GM12878 (cell line): ENCODE measurements at regions of chr2 and their contacts with region 1.

Region 1: GRCh38 chr2:74876081-74876886 is 42.4 kb downstream of the HK2 start:
- DNase-seq: peak; percentile 20
- ATAC-seq: peak; percentile 98
- H3K4me3 ChIP-seq: no peak overlapping the region
- H3K27ac ChIP-seq: no peak overlapping the region
- H3K4me1 ChIP-seq: no peaks in the 10 kb centered on the region
- H3K27me3 ChIP-seq: no peaks in the 10 kb centered on the region
- CTCF ChIP-seq: peak; percentile 37 to 68 (median 58); a peak in 5 of 6 replicates
- EP300 ChIP-seq: no peak
- POLR2A ChIP-seq: no peak
- RAD21 ChIP-seq: peak; percentile 77

Region 2: DNA sequence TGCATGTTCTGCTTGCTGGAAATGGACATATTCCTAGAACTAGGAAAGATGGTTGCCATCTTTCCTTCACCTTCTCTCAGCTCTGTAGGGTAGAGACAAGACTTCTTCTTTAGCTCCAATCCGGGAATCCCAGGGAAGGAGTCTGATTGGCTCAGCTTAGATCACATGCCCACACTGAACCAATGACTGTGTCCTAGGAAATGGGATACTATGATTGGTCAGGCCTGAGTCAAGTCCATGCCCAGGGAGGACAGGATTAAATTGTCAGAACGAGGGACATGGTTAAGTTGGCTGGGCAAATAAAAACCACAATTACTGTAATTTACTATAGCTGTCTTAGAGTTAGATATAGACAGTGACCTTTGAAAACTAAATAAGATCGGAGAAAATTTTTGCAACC is 190.9 kb before region 1 on chr2:
- CTCF ChIA-PET with region 1: interaction called, 29 read pairs
- POLR2A ChIA-PET with region 1: no interaction called
- RAD21 ChIA-PET with region 1: interaction called, 12 read pairs
- SMC1A ChIA-PET with region 1: interaction called, 19 read pairs
- in situ Hi-C with region 1: no loop called
- intact Hi-C with region 1: loop called (anchors 1 kb)
- DNase-seq: no peak
- ATAC-seq: no peak
- H3K4me3 ChIP-seq: no peak overlapping the region
- H3K27ac ChIP-seq: no peak overlapping the region
- H3K4me1 ChIP-seq: no peaks in the 10 kb centered on the region
- H3K27me3 ChIP-seq: no peaks in the 10 kb centered on the region
- CTCF ChIP-seq: no peak
- EP300 ChIP-seq: no peak
- POLR2A ChIP-seq: no peak
- RAD21 ChIP-seq: no peak

Region 3: GRCh38 chr2:74703373-74703772 is 172.9 kb before region 1 on chr2:
- CTCF ChIA-PET with region 1: interaction called, 4 read pairs
- POLR2A ChIA-PET with region 1: no interaction called
- RAD21 ChIA-PET with region 1: no interaction called
- SMC1A ChIA-PET with region 1: interaction called, 3 read pairs
- in situ Hi-C with region 1: loop called (anchors 5 kb)
- intact Hi-C with region 1: no loop called
- DNase-seq: no peak
- ATAC-seq: no peak
- H3K4me3 ChIP-seq: no peak overlapping the region
- H3K27ac ChIP-seq: no peak overlapping the region
- H3K4me1 ChIP-seq: peaks cover 9% of the 10 kb centered on the region
- H3K27me3 ChIP-seq: no peaks in the 10 kb centered on the region
- CTCF ChIP-seq: no peak
- EP300 ChIP-seq: no peak
- POLR2A ChIP-seq: no peak
- RAD21 ChIP-seq: no peak

Region 4: DNA sequence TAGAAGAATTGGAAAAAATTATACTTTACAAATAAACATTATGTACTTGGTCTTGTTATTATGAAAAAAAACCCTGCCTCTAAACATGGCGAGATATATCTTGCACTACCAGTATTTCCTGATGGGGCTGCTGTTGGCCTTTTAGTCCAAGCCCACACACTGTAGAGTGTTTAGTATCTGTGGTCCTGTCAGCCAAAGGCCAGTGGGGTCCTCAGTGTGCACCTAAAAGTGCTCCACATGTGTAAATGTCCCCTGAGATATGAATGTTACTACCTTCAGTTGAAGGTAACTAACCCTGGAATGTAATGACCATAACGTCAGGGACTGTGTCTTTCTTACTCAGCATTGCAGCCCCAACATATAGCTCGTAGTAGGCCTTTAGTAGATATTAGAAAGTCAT is 113.5 kb before region 1 on chr2:
- CTCF ChIA-PET with region 1: interaction called, 4 read pairs
- POLR2A ChIA-PET with region 1: no interaction called
- RAD21 ChIA-PET with region 1: no interaction called
- SMC1A ChIA-PET with region 1: interaction called, 4 read pairs
- in situ Hi-C with region 1: no loop called
- intact Hi-C with region 1: loop called (anchors 1 kb)
- DNase-seq: no peak
- ATAC-seq: peak; percentile 51
- H3K4me3 ChIP-seq: no peak overlapping the region
- H3K27ac ChIP-seq: no peak overlapping the region
- H3K4me1 ChIP-seq: peaks cover 12% of the 10 kb centered on the region; the same call in 1 of the 2 replicates
- H3K27me3 ChIP-seq: no peaks in the 10 kb centered on the region
- CTCF ChIP-seq: no peak
- EP300 ChIP-seq: no peak
- POLR2A ChIP-seq: no peak
- RAD21 ChIP-seq: peak; percentile 50

Region 5: DNA sequence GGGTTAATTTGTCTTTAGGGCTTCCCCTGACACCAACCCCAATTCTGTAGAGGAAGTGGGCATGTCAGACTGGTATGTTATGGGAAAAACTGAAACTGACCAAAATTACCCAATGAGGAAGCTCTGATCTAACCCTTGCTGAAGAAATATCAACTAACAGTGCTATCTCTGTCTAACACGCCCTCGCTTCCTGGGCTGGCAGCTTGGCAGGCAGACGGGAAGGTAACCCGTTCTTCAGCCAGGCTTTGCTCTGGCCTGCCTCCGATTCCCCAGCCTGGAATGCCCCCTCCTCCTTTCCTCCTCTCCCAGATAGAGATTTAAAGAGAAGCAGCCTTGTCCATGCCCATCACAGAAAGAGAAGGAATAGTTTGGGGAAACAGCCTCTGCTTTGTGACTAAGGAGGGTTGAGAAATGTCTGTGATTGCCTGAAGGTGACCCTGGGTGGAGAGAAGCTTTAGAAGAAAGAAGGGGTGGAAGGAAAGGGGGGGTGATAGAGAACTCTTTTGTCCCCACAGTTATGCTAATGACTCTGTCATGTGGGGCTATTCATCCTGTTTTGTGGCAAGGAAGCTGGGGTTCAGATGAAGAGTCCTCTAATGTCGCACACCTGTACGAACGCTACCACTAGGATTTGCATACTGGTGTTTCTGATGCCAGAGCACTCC is 26.9 kb before region 1 on chr2:
- CTCF ChIA-PET with region 1: interaction called, 18 read pairs
- POLR2A ChIA-PET with region 1: no interaction called
- RAD21 ChIA-PET with region 1: interaction called, 3 read pairs
- SMC1A ChIA-PET with region 1: interaction called, 6 read pairs
- in situ Hi-C with region 1: no loop called
- intact Hi-C with region 1: no loop called
- DNase-seq: peak; percentile 62
- ATAC-seq: peak; percentile 88
- H3K4me3 ChIP-seq: peak overlapping the region; percentile 59; the same call in 1 of the 2 replicates
- H3K27ac ChIP-seq: peak overlapping the region; percentile 80
- H3K4me1 ChIP-seq: peaks cover 55% of the 10 kb centered on the region
- H3K27me3 ChIP-seq: no peaks in the 10 kb centered on the region
- CTCF ChIP-seq: no peak
- EP300 ChIP-seq: no peak
- POLR2A ChIP-seq: peak; percentile 51; the same call in 1 of the 2 replicates
- RAD21 ChIP-seq: no peak

Region 6: GRCh38 chr2:74894272-74894981 is 18.1 kb after region 1 on chr2:
- CTCF ChIA-PET with region 1: no interaction called
- POLR2A ChIA-PET with region 1: no interaction called
- RAD21 ChIA-PET with region 1: no interaction called
- SMC1A ChIA-PET with region 1: no interaction called
- in situ Hi-C with region 1: no loop called
- intact Hi-C with region 1: no loop called
- DNase-seq: no peak
- ATAC-seq: no peak
- H3K4me3 ChIP-seq: no peak overlapping the region
- H3K27ac ChIP-seq: no peak overlapping the region
- H3K4me1 ChIP-seq: no peaks in the 10 kb centered on the region
- H3K27me3 ChIP-seq: no peaks in the 10 kb centered on the region
- CTCF ChIP-seq: no peak
- EP300 ChIP-seq: no peak
- POLR2A ChIP-seq: no peak
- RAD21 ChIP-seq: no peak